Activated T-helper 1 cell treated with anti-CD3 and anti-CD28 coated beads, Interleukin-12 subunit alpha, Interleukin-12 subunit beta, Interleukin-2, Interleukin-4 antibody, amounts not matched to agents 30 ng/mL and 10 ng/mL and 1 ng/mL, durations not matched to agents 14 hours and 24 hours and 36 hours (primary cell): ENCODE measurements at regions of chr14 and their contacts with region 1.

Region 1: GRCh38 chr14:52678591-52678990 is 16.8 kb downstream of the ERO1A start:
- DNase-seq: no peak
- H3K4me3 Mint-ChIP-seq: no peak overlapping the region
- H3K27ac Mint-ChIP-seq: no peak overlapping the region
- H3K4me1 Mint-ChIP-seq: peaks cover 16% of the 10 kb centered on the region
- H3K27me3 Mint-ChIP-seq: no peaks in the 10 kb centered on the region

Region 2: DNA sequence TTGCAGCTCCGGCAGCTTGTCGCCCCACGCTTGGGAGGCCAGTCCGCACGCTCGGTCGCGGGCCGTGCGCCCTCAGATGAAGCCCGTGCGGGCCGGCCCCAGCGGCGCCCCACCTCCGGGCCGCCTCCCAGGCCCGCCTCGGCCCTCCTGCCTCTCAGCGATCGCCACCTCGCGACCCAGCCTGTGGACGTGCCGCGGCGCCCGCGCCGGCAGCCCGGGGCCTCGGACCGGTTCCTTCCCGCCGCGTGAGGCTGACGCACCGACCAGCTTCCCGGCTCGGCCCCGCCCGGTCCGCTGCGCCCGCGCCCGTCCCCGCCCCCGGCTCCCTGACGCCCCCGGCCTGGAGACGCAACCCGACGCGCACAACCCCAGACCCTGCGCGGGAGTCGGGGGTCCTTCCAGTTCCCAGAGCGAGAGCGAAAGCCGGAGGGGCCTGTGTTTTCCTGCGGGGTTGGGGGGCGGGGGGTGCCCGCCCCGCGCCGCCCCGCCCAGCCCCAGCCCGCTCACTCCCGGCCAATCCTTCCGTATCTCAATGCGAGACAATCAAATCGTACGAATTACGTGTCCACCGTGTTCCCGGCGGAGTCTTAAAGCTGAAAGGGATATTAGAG is 17.0 kb after region 1 on chr14 and contains the start of gene ERO1A:
- intact Hi-C with region 1: loop called (anchors 2 kb)
- DNase-seq: peak; percentile 67
- H3K4me3 Mint-ChIP-seq: peak within 1 kb of the TSS; percentile 100
- H3K27ac Mint-ChIP-seq: peak within 1 kb of the TSS; percentile 99
- H3K4me1 Mint-ChIP-seq: peaks cover 42% of the 10 kb centered on the region
- H3K27me3 Mint-ChIP-seq: peaks cover 1% of the 10 kb centered on the region
- total RNA-seq, gene ERO1A: 144 and 158 TPM in 2 replicates